ENCODE measurements at regions of chr11 and their contacts with region 1.

Region 1: GRCh38 chr11:20110908-20111669 is 49.2 kb downstream of the DBX1 start:
- DNase-seq: peak; percentile 65
- H3K4me3 ChIP-seq: no peak overlapping the region
- H3K27ac ChIP-seq: no peak overlapping the region
- H3K4me1 ChIP-seq: no peaks in the 10 kb centered on the region
- CTCF ChIP-seq: peak; percentile 83

Region 2: GRCh38 chr11:19679952-19680828 is 430.9 kb before region 1 on chr11:
- CTCF ChIA-PET with region 1: no interaction called
- POLR2A ChIA-PET with region 1: no interaction called
- intact Hi-C with region 1: no loop called
- DNase-seq: no peak
- H3K4me3 ChIP-seq: no peak overlapping the region
- H3K27ac ChIP-seq: no peak overlapping the region
- H3K4me1 ChIP-seq: no peaks in the 10 kb centered on the region
- CTCF ChIP-seq: no peak

Region 3: DNA sequence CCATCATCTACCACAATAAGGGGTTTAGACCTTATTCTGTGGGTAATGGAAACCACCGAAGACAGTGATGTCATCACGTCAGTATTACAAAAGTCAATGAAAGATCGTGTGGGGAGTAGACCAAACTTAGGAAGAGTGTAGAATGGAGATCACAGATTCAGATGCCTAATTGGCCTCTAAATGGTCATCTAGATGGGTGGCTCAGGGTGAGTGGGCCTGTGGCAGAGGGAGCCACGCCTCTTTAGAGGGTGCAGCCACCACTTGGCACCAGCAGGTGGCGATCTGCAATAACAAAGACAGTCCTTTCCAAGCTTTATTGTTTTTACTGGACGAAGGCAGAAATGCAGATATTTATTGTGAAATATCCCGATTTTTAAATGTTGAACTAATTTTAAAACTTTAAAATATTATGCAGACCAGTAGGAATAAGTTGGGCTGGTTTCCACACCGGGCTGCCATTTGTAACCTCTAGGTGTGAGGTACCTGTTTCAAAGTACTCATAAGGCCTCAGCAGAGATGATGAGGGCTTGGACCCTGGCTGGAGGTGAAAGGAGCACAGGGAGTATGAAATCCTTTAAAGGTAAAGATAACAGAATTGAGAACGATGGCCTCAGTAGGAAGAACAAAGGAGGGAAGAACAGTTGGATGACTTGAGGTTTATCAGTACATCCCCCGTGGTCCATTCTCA is 172.8 kb before region 1 on chr11:
- CTCF ChIA-PET with region 1: no interaction called
- POLR2A ChIA-PET with region 1: no interaction called
- intact Hi-C with region 1: loop called (anchors 2 kb)
- DNase-seq: peak; percentile 42
- H3K4me3 ChIP-seq: no peak overlapping the region
- H3K27ac ChIP-seq: no peak overlapping the region
- H3K4me1 ChIP-seq: no peaks in the 10 kb centered on the region
- CTCF ChIP-seq: peak; percentile 91

Region 4: DNA sequence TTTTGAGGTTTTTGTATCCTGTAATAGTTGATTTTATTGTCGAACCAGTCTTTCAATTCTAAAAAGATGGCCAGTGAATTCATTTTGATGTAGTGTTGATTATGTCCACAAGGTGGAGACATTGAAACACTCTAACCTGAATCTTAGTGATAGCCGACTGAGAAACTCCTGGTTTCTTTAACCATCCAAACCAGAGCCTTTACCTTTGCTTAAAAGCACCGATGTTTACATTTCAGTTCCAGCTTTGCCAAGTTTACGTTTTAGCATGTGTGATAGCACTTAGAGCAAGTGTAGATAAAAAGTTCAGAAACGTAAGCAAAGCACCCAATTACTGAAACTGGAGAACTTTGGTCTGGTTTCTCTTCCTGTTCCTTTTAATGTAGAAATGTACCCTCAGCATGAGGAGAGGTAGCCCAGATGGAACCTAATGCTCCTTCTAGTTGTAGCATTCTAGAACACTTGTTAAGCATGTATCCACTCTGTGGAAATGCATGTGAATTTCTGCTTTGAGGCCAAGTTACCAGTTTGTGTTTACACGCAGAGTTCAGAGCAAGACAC is 159.5 kb before region 1 on chr11:
- CTCF ChIA-PET with region 1: no interaction called
- POLR2A ChIA-PET with region 1: no interaction called
- intact Hi-C with region 1: loop called (anchors 1 kb)
- DNase-seq: peak; percentile 58
- H3K4me3 ChIP-seq: peak overlapping the region; percentile 43
- H3K27ac ChIP-seq: no peak overlapping the region
- H3K4me1 ChIP-seq: no peaks in the 10 kb centered on the region
- CTCF ChIP-seq: peak; percentile 88

Measured in OCI-LY7 (cell line).